ENCODE measurements at regions of chr1 and their contacts with region 1.

Region 1: GRCh38 chr1:208652296-208653160 is 408.3 kb upstream of the PLXNA2 start:
- DNase-seq: peak; percentile 41 to 68 (median 66)
- H3K4me3 ChIP-seq: no peak overlapping the region
- H3K27ac ChIP-seq: no peak overlapping the region
- H3K4me1 ChIP-seq: no peaks in the 10 kb centered on the region
- H3K27me3 ChIP-seq: peaks cover 0 to 4% (median 2%) of the 10 kb centered on the region in 5 experiments

Region 2: GRCh38 chr1:208665936-208666335 is 13.4 kb after region 1 on chr1:
- CTCF ChIA-PET with region 1: interaction called, 13 read pairs
- POLR2A ChIA-PET with region 1: no interaction called
- DNase-seq: no peak
- H3K4me3 ChIP-seq: no peak overlapping the region
- H3K27ac ChIP-seq: no peak overlapping the region
- H3K4me1 ChIP-seq: no peaks in the 10 kb centered on the region
- H3K27me3 ChIP-seq: no peaks in the 10 kb centered on the region

Region 3: GRCh38 chr1:208988811-208989222 is 336.3 kb after region 1 on chr1:
- CTCF ChIA-PET with region 1: no interaction called
- POLR2A ChIA-PET with region 1: no interaction called
- DNase-seq: peak; percentile 50 to 80 (median 70)
- H3K4me3 ChIP-seq: peak overlapping the region in 6 of 7 experiments; percentile 45 to 79 (median 60)
- H3K27ac ChIP-seq: peak overlapping the region in 1 of 2 experiments; percentile 72
- H3K4me1 ChIP-seq: peaks cover 0 to 12% (median 8%) of the 10 kb centered on the region in 4 experiments
- H3K27me3 ChIP-seq: no peaks in the 10 kb centered on the region

Region 4: GRCh38 chr1:209207701-209208286 is 555.3 kb after region 1 on chr1:
- CTCF ChIA-PET with region 1: interaction called, 12 read pairs
- POLR2A ChIA-PET with region 1: no interaction called
- DNase-seq: peak; percentile 70 to 86 (median 82)
- H3K4me3 ChIP-seq: peak overlapping the region in 4 of 7 experiments; percentile 34 to 74 (median 62)
- H3K27ac ChIP-seq: no peak overlapping the region
- H3K4me1 ChIP-seq: peaks cover 0 to 14% (median 8%) of the 10 kb centered on the region in 4 experiments
- H3K27me3 ChIP-seq: peaks cover 3 to 23% (median 17%) of the 10 kb centered on the region in 5 experiments

Measured in common myeloid progenitor, CD34-positive (primary cell).